Left ventricle myocardium inferior (tissue), 1 donor: ENCODE measurements at regions of chr10 and their contacts with region 1.

Region 1: GRCh38 chr10:115129752-115130151 is 36.6 kb downstream of the ATRNL1 start:
- DNase-seq: no peak
- H3K4me3 ChIP-seq: no peak overlapping the region
- H3K27ac ChIP-seq: no peak overlapping the region
- H3K4me1 ChIP-seq: no peaks in the 10 kb centered on the region
- H3K27me3 ChIP-seq: no peaks in the 10 kb centered on the region
- CTCF ChIP-seq: peak; percentile 51

Region 2: GRCh38 chr10:114876602-114877300 is 253.0 kb before region 1 on chr10:
- intact Hi-C with region 1: loop called (anchors 10 kb)
- DNase-seq: peak; percentile 48
- H3K4me3 ChIP-seq: no peak overlapping the region
- H3K27ac ChIP-seq: no peak overlapping the region
- H3K4me1 ChIP-seq: no peaks in the 10 kb centered on the region
- H3K27me3 ChIP-seq: peaks cover 7% of the 10 kb centered on the region
- CTCF ChIP-seq: peak; percentile 79

Region 3: DNA sequence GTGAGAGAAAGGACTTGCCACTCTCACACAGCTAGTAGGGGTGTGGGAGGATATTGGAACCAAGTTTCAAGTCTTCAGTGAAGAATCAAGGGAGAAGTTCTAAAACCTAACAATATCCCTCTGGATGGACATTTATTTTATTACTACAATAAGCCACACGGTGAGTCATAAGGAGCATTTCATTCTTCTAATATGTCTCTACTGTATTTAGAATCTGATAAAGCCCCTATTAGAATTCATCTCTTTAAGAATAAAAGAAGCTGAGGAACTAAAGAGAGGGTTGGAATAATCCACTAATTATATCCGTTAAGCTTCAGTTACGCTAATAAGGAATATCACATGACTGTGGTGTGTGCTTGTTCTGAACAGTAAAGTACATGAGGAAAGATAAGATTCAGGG is 77.5 kb before region 1 on chr10:
- intact Hi-C with region 1: no loop called
- DNase-seq: no peak
- H3K4me3 ChIP-seq: no peak overlapping the region
- H3K27ac ChIP-seq: no peak overlapping the region
- H3K4me1 ChIP-seq: no peaks in the 10 kb centered on the region
- H3K27me3 ChIP-seq: no peaks in the 10 kb centered on the region
- CTCF ChIP-seq: no peak

Region 4: DNA sequence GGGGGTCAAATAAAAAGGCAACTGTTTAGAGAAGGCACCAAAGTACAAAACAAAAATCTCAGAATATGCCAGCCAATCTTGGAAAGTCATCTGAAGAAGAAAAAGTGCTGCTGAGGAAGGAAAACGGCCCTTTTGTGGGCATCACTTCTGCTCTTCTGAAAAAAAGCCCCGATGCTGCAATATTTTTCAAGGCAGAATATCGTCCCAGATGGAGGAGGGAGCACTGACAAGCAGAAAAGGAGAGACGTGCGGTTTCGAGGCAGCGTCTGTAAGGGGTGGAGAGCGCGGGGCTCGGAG is 37.5 kb before region 1 on chr10:
- intact Hi-C with region 1: no loop called
- DNase-seq: no peak
- H3K4me3 ChIP-seq: peak overlapping the region; percentile 75
- H3K27ac ChIP-seq: no peak overlapping the region
- H3K4me1 ChIP-seq: peaks cover 18% of the 10 kb centered on the region
- H3K27me3 ChIP-seq: peaks cover 69% of the 10 kb centered on the region
- CTCF ChIP-seq: no peak

Region 5: DNA sequence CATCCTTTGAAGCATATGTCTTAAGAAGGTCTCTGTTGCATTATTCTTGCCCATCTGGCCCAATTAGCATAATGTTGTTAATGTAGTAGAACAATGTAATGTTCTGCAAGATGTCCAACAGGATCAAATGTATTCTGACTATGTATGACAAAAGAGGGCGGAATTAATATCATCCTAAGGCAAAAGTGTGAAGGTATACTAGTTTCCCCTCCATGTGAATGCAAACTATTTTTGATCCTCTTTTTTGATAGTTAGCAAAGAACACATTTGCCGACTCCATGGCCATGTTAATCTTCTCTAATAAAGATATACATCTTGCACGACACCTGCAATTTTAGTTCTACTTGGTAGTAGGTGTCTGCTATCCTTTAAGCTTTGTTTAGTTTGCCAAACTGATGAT is 121.0 kb after region 1 on chr10:
- intact Hi-C with region 1: no loop called
- DNase-seq: no peak
- H3K4me3 ChIP-seq: no peak overlapping the region
- H3K27ac ChIP-seq: no peak overlapping the region
- H3K4me1 ChIP-seq: no peaks in the 10 kb centered on the region
- H3K27me3 ChIP-seq: no peaks in the 10 kb centered on the region
- CTCF ChIP-seq: no peak

Region 6: GRCh38 chr10:115566829-115567228 is 437.1 kb after region 1 on chr10:
- intact Hi-C with region 1: no loop called
- DNase-seq: no peak
- H3K4me3 ChIP-seq: no peak overlapping the region
- H3K27ac ChIP-seq: no peak overlapping the region
- H3K4me1 ChIP-seq: no peaks in the 10 kb centered on the region
- H3K27me3 ChIP-seq: no peaks in the 10 kb centered on the region
- CTCF ChIP-seq: no peak